GM10248 (cell line): ENCODE measurements at regions of chr11 and their contacts with region 1.

Region 1: GRCh38 chr11:16891964-16892363 is 122.2 kb downstream of the PLEKHA7 start:
- DNase-seq: no peak
- CTCF ChIP-seq: no peak

Region 2: DNA sequence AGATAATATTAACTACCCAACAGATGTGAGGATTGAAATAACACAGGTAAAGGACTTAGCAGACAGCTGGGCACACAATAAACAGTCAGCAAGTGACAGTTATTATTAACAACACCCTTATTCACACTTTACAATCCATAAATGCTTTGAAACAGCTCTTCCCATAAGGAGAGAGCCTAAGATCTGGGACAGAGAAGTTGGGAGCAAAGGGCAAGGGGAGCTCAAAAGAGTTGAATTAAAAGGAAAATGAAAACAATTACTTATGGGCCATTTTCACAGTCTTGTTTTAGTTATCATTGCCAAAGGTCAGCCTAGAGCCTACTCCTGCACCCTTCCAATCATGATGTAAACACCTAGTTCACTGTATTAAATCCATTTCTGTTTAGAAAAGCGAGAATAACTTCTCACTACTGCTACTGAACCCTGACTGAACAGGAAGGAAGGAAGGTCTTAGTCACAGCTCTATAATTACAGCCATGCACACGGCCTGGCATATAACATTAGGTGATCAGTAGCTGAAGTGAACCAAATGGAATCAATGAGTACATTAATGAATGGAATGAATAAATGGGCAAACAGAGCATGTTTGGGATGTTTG is 10.9 kb after region 1 on chr11:
- CTCF ChIA-PET with region 1: interaction called, 18 read pairs
- POLR2A ChIA-PET with region 1: no interaction called
- DNase-seq: peak; percentile 37
- CTCF ChIP-seq: no peak